HCT116 (cell line): ENCODE measurements at regions of chr10 and their contacts with region 1.

Region 1: DNA sequence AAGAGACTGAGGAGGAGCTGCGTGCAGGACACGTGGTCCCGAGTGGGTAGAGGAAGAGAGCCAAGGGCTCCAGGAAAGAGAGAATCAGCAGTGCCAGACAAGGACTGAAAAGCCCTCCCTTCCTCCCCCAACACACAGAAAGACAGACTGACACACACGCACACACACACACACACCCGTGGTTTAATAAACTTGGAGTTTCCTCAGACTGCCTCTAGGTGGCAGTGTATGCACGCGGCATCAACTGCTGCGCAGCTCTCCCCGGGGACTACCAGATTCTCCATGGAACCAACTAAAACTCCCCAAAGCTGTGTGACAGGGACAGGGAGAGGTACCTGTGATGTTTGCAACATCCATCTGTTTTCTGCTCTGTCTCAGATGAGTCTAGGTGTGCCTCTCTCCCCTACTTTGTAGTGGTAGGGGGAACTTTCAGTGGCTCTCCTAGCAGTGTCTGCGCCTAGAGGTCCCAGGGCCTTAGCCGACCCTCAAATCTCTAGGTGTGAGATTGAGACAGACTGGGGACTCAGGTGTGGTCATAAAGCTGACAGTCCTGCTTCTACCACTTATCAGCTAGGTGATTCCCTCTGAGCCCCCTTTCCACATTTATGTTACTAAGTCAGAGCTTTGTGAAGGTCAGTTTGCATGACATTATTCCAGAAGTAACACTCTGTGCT is 9.3 kb upstream of the TSPAN14 start:
- DNase-seq: no peak
- ATAC-seq: peak; percentile 92
- H3K4me3 ChIP-seq: no peak overlapping the region
- H3K27ac ChIP-seq: no peak overlapping the region
- H3K4me1 ChIP-seq: peaks cover 0 to 17% of the 10 kb centered on the region in 2 experiments; a peak in 2 of 4 replicates
- H3K27me3 ChIP-seq: no peaks in the 10 kb centered on the region
- CTCF ChIP-seq: peak; percentile 82 to 90 (median 86)
- POLR2A ChIP-seq: no peak
- RAD21 ChIP-seq: peak; percentile 98

Region 2: DNA sequence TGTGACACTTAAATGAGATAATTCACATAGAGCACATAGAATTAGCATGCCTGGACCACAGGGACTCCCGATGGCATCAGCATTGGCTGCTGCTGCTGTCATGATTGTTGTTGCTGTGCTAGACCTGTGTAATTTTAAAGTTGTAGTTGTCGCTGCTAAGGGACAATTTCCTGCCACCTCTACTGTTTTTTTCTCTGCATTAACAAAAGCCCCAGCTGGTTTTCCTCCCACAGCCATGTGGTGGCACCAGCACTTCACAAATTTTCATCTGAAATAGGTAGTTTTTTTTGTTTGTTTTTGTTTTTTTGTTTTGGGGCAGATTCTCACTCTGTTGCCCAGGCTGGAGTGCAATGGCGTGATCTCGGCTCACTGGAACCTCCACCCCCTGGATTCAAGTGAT is 61.8 kb before region 1 on chr10:
- CTCF ChIA-PET with region 1: interaction called, 11 read pairs
- POLR2A ChIA-PET with region 1: no interaction called
- RAD21 ChIA-PET with region 1: interaction called in 1 of 2 experiments, 3 read pairs
- intact Hi-C with region 1: loop called (anchors 1 kb)
- DNase-seq: peak; percentile 49
- ATAC-seq: peak; percentile 57
- H3K4me3 ChIP-seq: peak overlapping the region; percentile 13 to 23; a peak in 3 of 4 replicates
- H3K27ac ChIP-seq: no peak overlapping the region
- H3K4me1 ChIP-seq: peaks cover 0 to 13% of the 10 kb centered on the region in 2 experiments; a peak in 3 of 4 replicates
- H3K27me3 ChIP-seq: no peaks in the 10 kb centered on the region
- CTCF ChIP-seq: peak; percentile 66 to 88 (median 78)
- POLR2A ChIP-seq: no peak
- RAD21 ChIP-seq: peak; percentile 89

Region 3: GRCh38 chr10:80498833-80499741 is 54.3 kb after region 1 on chr10:
- CTCF ChIA-PET with region 1: interaction called, 71 read pairs
- POLR2A ChIA-PET with region 1: no interaction called
- RAD21 ChIA-PET with region 1: interaction called, 21 to 22 read pairs
- intact Hi-C with region 1: no loop called
- DNase-seq: peak; percentile 85
- ATAC-seq: peak; percentile 85
- H3K4me3 ChIP-seq: peak overlapping the region in 1 of 2 experiments; percentile 27; a peak in 2 of 4 replicates
- H3K27ac ChIP-seq: peak overlapping the region; percentile 95
- H3K4me1 ChIP-seq: peaks cover 90 to 95% of the 10 kb centered on the region in 2 experiments
- H3K27me3 ChIP-seq: no peaks in the 10 kb centered on the region
- CTCF ChIP-seq: 0 out of 6 replicates have a peak, but pooled peaks of 1 of the 3 experiments have one; percentile 4
- POLR2A ChIP-seq: no peak
- RAD21 ChIP-seq: no peak

Region 4: GRCh38 chr10:80509403-80510161 is 64.8 kb after region 1 on chr10:
- CTCF ChIA-PET with region 1: interaction called, 71 read pairs
- POLR2A ChIA-PET with region 1: interaction called, 4 read pairs
- RAD21 ChIA-PET with region 1: interaction called, 21 to 22 read pairs
- intact Hi-C with region 1: loop called (anchors 1 kb)
- DNase-seq: no peak
- ATAC-seq: peak; percentile 49
- H3K4me3 ChIP-seq: peak overlapping the region; percentile 7 to 41
- H3K27ac ChIP-seq: peak overlapping the region; percentile 61
- H3K4me1 ChIP-seq: peaks cover 55 to 67% of the 10 kb centered on the region in 2 experiments
- H3K27me3 ChIP-seq: no peaks in the 10 kb centered on the region
- CTCF ChIP-seq: no peak
- POLR2A ChIP-seq: no peak
- RAD21 ChIP-seq: no peak

Region 5: GRCh38 chr10:80599424-80599847 is 154.7 kb after region 1 on chr10:
- CTCF ChIA-PET with region 1: interaction called, 6 read pairs
- POLR2A ChIA-PET with region 1: no interaction called
- RAD21 ChIA-PET with region 1: interaction called in 1 of 2 experiments, 3 read pairs
- intact Hi-C with region 1: loop called (anchors 2 kb)
- DNase-seq: peak; percentile 59
- ATAC-seq: peak; percentile 86
- H3K4me3 ChIP-seq: no peak overlapping the region
- H3K27ac ChIP-seq: no peak overlapping the region
- H3K4me1 ChIP-seq: 0 out of 4 replicates have a peak, but pooled peaks cover 0 to 3% of the 10 kb centered on the region in 2 experiments
- H3K27me3 ChIP-seq: no peaks in the 10 kb centered on the region
- CTCF ChIP-seq: peak; percentile 58 to 96 (median 94); a peak in 5 of 6 replicates
- POLR2A ChIP-seq: no peak
- RAD21 ChIP-seq: peak; percentile 59

Region 6: DNA sequence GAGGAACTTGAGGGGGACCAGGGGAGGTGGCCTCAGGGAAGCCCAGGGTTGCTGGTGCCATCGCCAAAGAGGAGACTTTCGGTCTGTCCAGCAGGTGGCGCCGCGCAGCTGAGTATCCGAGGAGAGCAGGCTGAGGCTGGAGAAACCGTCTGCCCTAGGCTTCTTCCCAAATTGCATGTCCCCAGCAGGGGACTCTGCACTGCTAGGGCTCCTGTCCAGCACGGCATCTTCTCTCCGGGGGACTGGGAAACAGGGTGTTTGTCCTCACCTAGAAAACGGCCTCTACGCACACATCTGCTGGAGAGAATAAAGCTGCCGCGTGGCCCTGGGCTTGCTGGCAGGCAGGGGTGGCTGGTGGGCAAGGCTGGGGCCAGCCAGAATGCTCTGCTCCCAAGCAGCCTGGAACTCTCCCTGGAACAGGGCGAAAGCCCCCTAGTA is 254.8 kb after region 1 on chr10:
- CTCF ChIA-PET with region 1: no interaction called
- POLR2A ChIA-PET with region 1: no interaction called
- RAD21 ChIA-PET with region 1: no interaction called
- intact Hi-C with region 1: loop called (anchors 10 kb)
- DNase-seq: peak; percentile 51
- ATAC-seq: peak; percentile 98
- H3K4me3 ChIP-seq: no peak overlapping the region
- H3K27ac ChIP-seq: no peak overlapping the region
- H3K4me1 ChIP-seq: no peaks in the 10 kb centered on the region
- H3K27me3 ChIP-seq: peaks cover 3% of the 10 kb centered on the region; the same call in 1 of the 2 replicates
- CTCF ChIP-seq: peak; percentile 83 to 91 (median 89)
- POLR2A ChIP-seq: no peak
- RAD21 ChIP-seq: peak; percentile 82